H1 (cell line): ENCODE measurements at regions of chr2 and their contacts with region 1.

Region 1: GRCh38 chr2:216666461-216667233 is 28.7 kb downstream of the IGFBP5 start:
- DNase-seq: peak; percentile 71 to 92
- H3K4me3 ChIP-seq: no peak overlapping the region; a peak in 1 of 8 replicates
- H3K27ac ChIP-seq: no peak overlapping the region
- H3K4me1 ChIP-seq: peaks cover 0 to 13% (median 10%) of the 10 kb centered on the region in 4 experiments; a peak in 6 of 7 replicates
- H3K27me3 ChIP-seq: no peaks in the 10 kb centered on the region
- CTCF ChIP-seq: peak; percentile 90 to 100 (median 98)
- EP300 ChIP-seq: no peak
- POLR2A ChIP-seq: no peak
- RAD21 ChIP-seq: peak; percentile 100

Region 2: GRCh38 chr2:216498418-216499413 is 167.9 kb before region 1 on chr2 and contains the start of gene RPL37A:
- CTCF ChIA-PET with region 1: interaction called, 3 read pairs
- POLR2A ChIA-PET with region 1: interaction called, 18 read pairs
- DNase-seq: peak; percentile 75 to 90
- H3K4me3 ChIP-seq: peak within 1 kb of the TSS; percentile 86 to 97 (median 92)
- H3K27ac ChIP-seq: peak within 1 kb of the TSS; percentile 86
- H3K4me1 ChIP-seq: peaks cover 2 to 12% (median 4%) of the 10 kb centered on the region in 4 experiments; a peak in 6 of 7 replicates
- H3K27me3 ChIP-seq: no peaks in the 10 kb centered on the region
- CTCF ChIP-seq: no peak
- EP300 ChIP-seq: no peak
- POLR2A ChIP-seq: peak; percentile 98 to 100
- RAD21 ChIP-seq: no peak
- total RNA-seq, gene RPL37A: 3,180 and 3,341 TPM in 2 replicates

Region 3: GRCh38 chr2:216540920-216541319 is 125.7 kb before region 1 on chr2:
- CTCF ChIA-PET with region 1: interaction called, 11 read pairs
- POLR2A ChIA-PET with region 1: no interaction called
- DNase-seq: no peak
- H3K4me3 ChIP-seq: no peak overlapping the region
- H3K27ac ChIP-seq: no peak overlapping the region
- H3K4me1 ChIP-seq: no peaks in the 10 kb centered on the region
- H3K27me3 ChIP-seq: no peaks in the 10 kb centered on the region; a peak in 1 of 7 replicates
- CTCF ChIP-seq: no peak
- EP300 ChIP-seq: no peak
- POLR2A ChIP-seq: no peak
- RAD21 ChIP-seq: no peak

Region 4: DNA sequence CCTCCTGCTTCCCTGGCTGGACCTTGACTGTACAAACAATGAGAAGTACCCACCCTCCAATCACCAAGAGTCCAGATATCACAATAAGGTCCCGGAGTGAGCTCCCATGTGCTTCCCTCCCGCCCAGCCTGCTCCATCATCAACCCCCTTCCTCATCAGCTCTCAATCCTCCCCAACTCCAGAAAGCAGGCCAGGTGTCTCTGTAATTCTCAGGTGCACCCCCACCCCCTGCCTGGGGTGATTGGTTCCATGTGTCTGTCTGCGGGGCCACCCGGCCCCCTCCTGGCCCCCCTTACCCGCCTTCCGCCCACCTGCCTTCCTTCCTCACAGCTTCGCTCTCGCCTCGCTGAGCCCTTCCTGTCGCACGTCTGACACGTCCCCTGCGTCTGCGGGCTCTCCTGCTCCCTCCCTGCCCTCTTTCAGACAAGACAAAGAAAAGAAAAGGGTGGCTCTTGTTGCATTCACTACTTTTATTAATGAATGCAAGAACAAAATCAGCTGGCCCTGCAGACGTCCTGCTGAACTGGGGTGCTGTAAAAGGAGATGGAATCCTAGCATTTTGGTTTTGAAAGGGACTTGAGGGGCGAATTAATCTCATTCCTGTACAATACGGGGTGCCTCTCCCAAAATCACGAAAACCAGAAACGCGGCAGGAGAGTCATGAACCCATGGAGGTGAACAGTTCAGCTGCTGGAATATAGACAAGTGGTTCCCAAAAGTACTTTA is 59.9 kb before region 1 on chr2:
- CTCF ChIA-PET with region 1: interaction called, 11 read pairs
- POLR2A ChIA-PET with region 1: no interaction called
- DNase-seq: peak in 1 of 2 experiments; percentile 71
- H3K4me3 ChIP-seq: peak overlapping the region in 2 of 4 experiments; percentile 26 to 49; a peak in 3 of 8 replicates
- H3K27ac ChIP-seq: no peak overlapping the region; the same call in 1 of the 2 replicates
- H3K4me1 ChIP-seq: peaks cover 11 to 22% (median 20%) of the 10 kb centered on the region in 4 experiments
- H3K27me3 ChIP-seq: peaks cover 0 to 3% (median 2%) of the 10 kb centered on the region in 4 experiments; a peak in 2 of 7 replicates
- CTCF ChIP-seq: no peak
- EP300 ChIP-seq: no peak
- POLR2A ChIP-seq: no peak
- RAD21 ChIP-seq: no peak

Region 5: GRCh38 chr2:216632952-216633615 is 33.6 kb before region 1 on chr2 and contains the start of gene IGFBP2:
- CTCF ChIA-PET with region 1: interaction called, 251 read pairs
- POLR2A ChIA-PET with region 1: interaction called, 19 read pairs
- DNase-seq: peak in 1 of 2 experiments; percentile 83
- H3K4me3 ChIP-seq: peak within 1 kb of the TSS; percentile 71 to 93 (median 86)
- H3K27ac ChIP-seq: peak within 1 kb of the TSS; percentile 35; the same call in 1 of the 2 replicates
- H3K4me1 ChIP-seq: peaks cover 14 to 25% (median 18%) of the 10 kb centered on the region in 4 experiments
- H3K27me3 ChIP-seq: peaks cover 0 to 8% (median 6%) of the 10 kb centered on the region in 4 experiments; a peak in 3 of 7 replicates
- CTCF ChIP-seq: 0 out of 4 replicates have a peak, but pooled peaks of 1 of the 3 experiments have one; percentile 6
- EP300 ChIP-seq: no peak
- POLR2A ChIP-seq: peak; percentile 44 to 67
- RAD21 ChIP-seq: peak in 1 of 2 experiments; percentile 10; a peak in 1 of 4 replicates
- total RNA-seq, gene IGFBP2: 322 and 326 TPM in 2 replicates

Region 6: GRCh38 chr2:216687646-216688045 is 21.0 kb after region 1 on chr2:
- CTCF ChIA-PET with region 1: interaction called, 33 read pairs
- POLR2A ChIA-PET with region 1: interaction called, 5 read pairs
- DNase-seq: peak in 1 of 2 experiments; percentile 92
- H3K4me3 ChIP-seq: no peak overlapping the region
- H3K27ac ChIP-seq: no peak overlapping the region
- H3K4me1 ChIP-seq: peaks cover 9 to 18% (median 12%) of the 10 kb centered on the region in 4 experiments; a peak in 6 of 7 replicates
- H3K27me3 ChIP-seq: peaks cover 0 to 12% (median 4%) of the 10 kb centered on the region in 4 experiments; a peak in 5 of 7 replicates
- CTCF ChIP-seq: peak; percentile 89 to 92 (median 90)
- EP300 ChIP-seq: no peak
- POLR2A ChIP-seq: no peak
- RAD21 ChIP-seq: peak; percentile 65 to 81